Left ventricle myocardium inferior (tissue), 1 donor: ENCODE measurements at regions of chr2 and their contacts with region 1.

Region 1: DNA sequence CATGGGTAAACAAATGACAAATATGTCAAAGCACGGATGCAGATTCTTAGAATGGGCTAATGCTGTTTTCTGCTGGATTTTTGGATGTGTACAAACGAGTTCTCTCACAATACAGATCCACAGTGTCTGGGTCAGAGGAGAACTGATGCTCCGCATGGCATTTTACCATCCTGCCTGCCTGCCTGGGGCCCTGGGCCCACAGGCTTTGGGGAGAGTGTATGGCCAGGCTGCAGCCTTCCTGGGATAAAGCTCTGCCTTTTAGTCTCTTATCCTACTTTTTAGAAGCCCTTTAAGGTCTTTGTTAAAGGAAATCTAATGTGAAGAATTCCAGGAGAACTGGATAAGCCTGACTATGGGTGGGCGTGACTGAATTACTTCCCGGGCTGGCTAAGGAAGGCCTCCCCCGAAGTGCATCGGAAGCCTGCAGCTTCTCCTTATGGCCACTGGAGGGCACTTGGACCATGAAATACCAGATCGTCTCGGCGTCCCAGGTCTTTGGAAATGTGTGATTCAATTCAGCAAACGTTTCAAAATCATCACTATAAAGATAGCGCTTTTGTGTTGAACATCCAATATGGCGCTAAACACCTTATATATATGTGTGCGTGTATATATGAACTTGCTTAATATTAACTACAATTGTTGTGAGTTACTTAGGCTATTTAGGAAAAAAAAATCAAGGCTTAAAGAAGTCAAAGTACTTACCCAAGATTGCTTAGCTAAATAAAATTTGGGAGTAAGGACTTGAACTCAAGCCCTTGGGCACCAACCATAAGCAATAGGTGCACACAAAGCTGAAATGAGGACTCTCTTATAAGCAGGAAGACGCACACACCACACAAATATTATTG is 15.2 kb upstream of the DNPEP start:
- DNase-seq: no peak
- H3K4me3 ChIP-seq: no peak overlapping the region
- H3K27ac ChIP-seq: peak overlapping the region; percentile 96
- H3K4me1 ChIP-seq: peaks cover 44% of the 10 kb centered on the region
- H3K27me3 ChIP-seq: peaks cover 14% of the 10 kb centered on the region
- CTCF ChIP-seq: peak; percentile 94

Region 2: GRCh38 chr2:219530048-219530963 is 127.4 kb after region 1 on chr2:
- intact Hi-C with region 1: loop called (anchors 5 kb)
- DNase-seq: peak; percentile 79
- H3K4me3 ChIP-seq: peak overlapping the region; percentile 40
- H3K27ac ChIP-seq: no peak overlapping the region
- H3K4me1 ChIP-seq: peaks cover 26% of the 10 kb centered on the region
- H3K27me3 ChIP-seq: peaks cover 72% of the 10 kb centered on the region
- CTCF ChIP-seq: peak; percentile 97